ENCODE measurements at regions of chr6 and their contacts with region 1.

Region 1: GRCh38 chr6:43369174-43370022 is at the start of gene ZNF318:
- DNase-seq: peak; percentile 85 to 98 (median 93)
- ATAC-seq: peak; percentile 95
- H3K4me3 ChIP-seq: peak within 1 kb of the TSS; percentile 69 to 81
- H3K4me3 Mint-ChIP-seq: peak within 1 kb of the TSS; percentile 89
- H3K27ac ChIP-seq: peak within 1 kb of the TSS; percentile 76 to 87
- H3K27ac Mint-ChIP-seq: peak within 1 kb of the TSS; percentile 96
- H3K4me1 ChIP-seq: peaks cover 33% of the 10 kb centered on the region
- H3K4me1 Mint-ChIP-seq: peaks cover 43% of the 10 kb centered on the region
- H3K27me3 ChIP-seq: no peaks in the 10 kb centered on the region
- H3K27me3 Mint-ChIP-seq: no peaks in the 10 kb centered on the region
- CTCF ChIP-seq: no peak
- total RNA-seq, gene ZNF318: 18.2 TPM

Region 2: GRCh38 chr6:43386492-43386891 is 17.1 kb after region 1 on chr6:
- CTCF ChIA-PET with region 1: interaction called, 17 read pairs
- POLR2A ChIA-PET with region 1: interaction called, 65 read pairs
- intact Hi-C with region 1: loop called (anchors 1 kb)
- DNase-seq: peak in 2 of 9 experiments; percentile 43 to 61
- ATAC-seq: no peak
- H3K4me3 ChIP-seq: no peak overlapping the region
- H3K4me3 Mint-ChIP-seq: no peak overlapping the region
- H3K27ac ChIP-seq: no peak overlapping the region
- H3K27ac Mint-ChIP-seq: no peak overlapping the region
- H3K4me1 ChIP-seq: peaks cover 54% of the 10 kb centered on the region
- H3K4me1 Mint-ChIP-seq: peaks cover 66% of the 10 kb centered on the region
- H3K27me3 ChIP-seq: peaks cover 0 to 7% of the 10 kb centered on the region in 2 experiments
- H3K27me3 Mint-ChIP-seq: peaks cover 6% of the 10 kb centered on the region
- CTCF ChIP-seq: no peak

Region 3: GRCh38 chr6:43499028-43499815 is 129.8 kb after region 1 on chr6:
- CTCF ChIA-PET with region 1: no interaction called
- POLR2A ChIA-PET with region 1: no interaction called
- intact Hi-C with region 1: no loop called
- DNase-seq: no peak
- ATAC-seq: no peak
- H3K4me3 ChIP-seq: no peak overlapping the region
- H3K4me3 Mint-ChIP-seq: no peak overlapping the region
- H3K27ac ChIP-seq: no peak overlapping the region
- H3K27ac Mint-ChIP-seq: no peak overlapping the region
- H3K4me1 ChIP-seq: peaks cover 15% of the 10 kb centered on the region
- H3K4me1 Mint-ChIP-seq: peaks cover 13% of the 10 kb centered on the region
- H3K27me3 ChIP-seq: no peaks in the 10 kb centered on the region
- H3K27me3 Mint-ChIP-seq: no peaks in the 10 kb centered on the region
- CTCF ChIP-seq: no peak

Region 4: GRCh38 chr6:43575772-43576551 is 206.6 kb after region 1 on chr6 and contains the starts of genes POLH and XPO5:
- CTCF ChIA-PET with region 1: no interaction called
- POLR2A ChIA-PET with region 1: no interaction called
- intact Hi-C with region 1: loop called in 1 of 2 experiments (anchors 2 kb)
- DNase-seq: peak; percentile 80 to 97 (median 90)
- ATAC-seq: peak; percentile 96
- H3K4me3 ChIP-seq: peak within 1 kb of the TSS; percentile 78 to 89
- H3K4me3 Mint-ChIP-seq: peak within 1 kb of the TSS; percentile 95
- H3K27ac ChIP-seq: peak within 1 kb of the TSS; percentile 55 to 66
- H3K27ac Mint-ChIP-seq: peak within 1 kb of the TSS; percentile 93
- H3K4me1 ChIP-seq: peaks cover 20% of the 10 kb centered on the region
- H3K4me1 Mint-ChIP-seq: peaks cover 36% of the 10 kb centered on the region
- H3K27me3 ChIP-seq: no peaks in the 10 kb centered on the region
- H3K27me3 Mint-ChIP-seq: no peaks in the 10 kb centered on the region
- CTCF ChIP-seq: no peak
- total RNA-seq, gene POLH: 3.4 to 3.7 TPM
- total RNA-seq, gene XPO5: 29.6 to 39.9 TPM

Measured in CD8-positive, alpha-beta T cell (primary cell).